ENCODE measurements at regions of chr3 and their contacts with region 1.

Region 1: GRCh38 chr3:106590216-106590615 is 721.4 kb upstream of the CBLB start:
- DNase-seq: no peak

Region 2: DNA sequence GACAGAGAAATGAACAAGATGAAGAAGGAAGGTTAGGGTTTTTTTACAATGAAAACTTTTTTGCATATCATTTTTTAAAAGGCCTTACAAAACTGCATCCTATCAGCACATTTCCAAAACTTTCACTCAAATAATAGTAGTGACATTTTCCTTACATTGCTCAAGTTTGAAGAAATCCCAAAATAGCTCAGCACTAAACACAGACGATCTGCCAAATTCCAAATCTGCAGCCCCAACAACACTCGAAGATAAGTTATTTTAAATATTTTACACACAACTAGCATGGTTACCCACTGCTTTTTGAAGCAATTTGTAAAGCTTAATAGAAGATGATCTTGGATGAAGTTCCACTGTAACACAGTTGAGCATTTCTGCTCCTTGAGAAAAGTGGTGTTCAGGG is 1759.1 kb before region 1 on chr3:
- intact Hi-C with region 1: loop called in 1 of 2 experiments (anchors 5 kb)
- DNase-seq: no peak

Region 3: DNA sequence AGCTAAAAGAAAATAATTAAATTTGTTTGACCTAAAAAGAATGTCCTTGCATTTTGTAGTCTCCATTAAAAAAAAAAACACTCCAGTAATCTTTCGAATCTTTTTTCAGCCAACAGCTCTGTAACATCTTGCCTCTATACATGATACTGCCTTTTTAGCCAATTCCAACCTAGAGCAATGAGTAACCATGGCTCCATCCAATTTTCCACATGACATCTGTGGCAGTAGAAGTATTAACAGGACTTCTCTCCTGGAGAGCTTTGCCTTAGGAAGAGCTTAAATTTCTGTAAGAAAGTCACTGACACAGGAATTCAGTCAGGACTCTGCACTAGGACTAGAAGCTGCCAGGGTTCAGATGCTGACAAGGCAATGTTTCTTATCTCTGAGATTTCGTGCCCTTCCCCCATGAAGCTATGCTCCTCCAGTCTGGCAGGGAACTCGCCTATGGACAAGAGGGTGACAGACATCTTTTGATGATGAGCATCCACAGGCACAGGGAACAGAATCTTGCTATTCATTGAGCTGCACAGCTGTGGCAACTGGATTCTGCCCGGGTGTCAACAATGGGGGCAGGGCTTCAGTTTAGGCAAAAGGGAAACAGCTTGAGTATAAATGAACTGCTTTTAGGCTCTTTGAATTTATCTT is 1141.8 kb before region 1 on chr3:
- intact Hi-C with region 1: no loop called
- DNase-seq: no peak